Dorsolateral prefrontal cortex (tissue), 120 donors: ENCODE measurements at regions of chr13 and their contacts with region 1.

Region 1: DNA sequence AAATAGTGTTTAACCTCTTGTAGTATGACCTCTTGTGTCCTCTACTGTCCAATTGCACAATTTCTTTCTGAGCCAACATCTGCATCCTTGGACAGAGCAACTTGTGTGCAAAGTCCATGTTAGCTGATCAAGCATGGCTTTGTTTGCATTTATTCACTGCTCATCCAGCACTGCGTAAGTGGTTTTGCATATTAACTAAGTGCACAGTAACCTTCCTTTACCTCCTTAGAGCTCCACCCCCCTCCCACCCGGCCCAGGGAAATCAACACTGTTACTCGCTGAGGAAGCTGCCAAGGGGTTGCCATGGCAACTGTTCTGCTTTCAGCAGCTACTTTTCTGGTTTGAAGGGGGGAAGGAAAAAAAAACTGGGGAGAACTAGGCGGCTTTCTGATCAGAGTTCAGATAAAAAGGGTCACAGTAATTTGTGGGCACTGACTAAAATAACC is 153.5 kb upstream of the KLF12 start:
- DNase-seq: peak; percentile 45 to 90 (median 80)
- H3K4me3 ChIP-seq: peak overlapping the region; percentile 23 to 67 (median 50)
- H3K27ac ChIP-seq: peak overlapping the region in 50 of 59 donors; percentile 8 to 89 (median 72)
- H3K27me3 ChIP-seq: no peaks in the 10 kb centered on the region
- CTCF ChIP-seq: no peak

Region 2: GRCh38 chr13:73754727-73755292 is 532.9 kb before region 1 on chr13:
- intact Hi-C with region 1: loop called in 1 of 2 experiments (anchors 10 kb)
- DNase-seq: peak in 1 of 10 donors; percentile 9
- H3K4me3 ChIP-seq: no peak overlapping the region
- H3K27ac ChIP-seq: no peak overlapping the region
- H3K27me3 ChIP-seq: no peaks in the 10 kb centered on the region
- CTCF ChIP-seq: peak; percentile 66 to 90 (median 79)

Region 3: GRCh38 chr13:73835138-73835721 is 452.5 kb before region 1 on chr13:
- intact Hi-C with region 1: loop called (anchors 5 to 10 kb)
- DNase-seq: no peak
- H3K4me3 ChIP-seq: no peak overlapping the region
- H3K27ac ChIP-seq: no peak overlapping the region
- H3K27me3 ChIP-seq: no peaks in the 10 kb centered on the region
- CTCF ChIP-seq: peak; percentile 32 to 82 (median 72)

Region 4: DNA sequence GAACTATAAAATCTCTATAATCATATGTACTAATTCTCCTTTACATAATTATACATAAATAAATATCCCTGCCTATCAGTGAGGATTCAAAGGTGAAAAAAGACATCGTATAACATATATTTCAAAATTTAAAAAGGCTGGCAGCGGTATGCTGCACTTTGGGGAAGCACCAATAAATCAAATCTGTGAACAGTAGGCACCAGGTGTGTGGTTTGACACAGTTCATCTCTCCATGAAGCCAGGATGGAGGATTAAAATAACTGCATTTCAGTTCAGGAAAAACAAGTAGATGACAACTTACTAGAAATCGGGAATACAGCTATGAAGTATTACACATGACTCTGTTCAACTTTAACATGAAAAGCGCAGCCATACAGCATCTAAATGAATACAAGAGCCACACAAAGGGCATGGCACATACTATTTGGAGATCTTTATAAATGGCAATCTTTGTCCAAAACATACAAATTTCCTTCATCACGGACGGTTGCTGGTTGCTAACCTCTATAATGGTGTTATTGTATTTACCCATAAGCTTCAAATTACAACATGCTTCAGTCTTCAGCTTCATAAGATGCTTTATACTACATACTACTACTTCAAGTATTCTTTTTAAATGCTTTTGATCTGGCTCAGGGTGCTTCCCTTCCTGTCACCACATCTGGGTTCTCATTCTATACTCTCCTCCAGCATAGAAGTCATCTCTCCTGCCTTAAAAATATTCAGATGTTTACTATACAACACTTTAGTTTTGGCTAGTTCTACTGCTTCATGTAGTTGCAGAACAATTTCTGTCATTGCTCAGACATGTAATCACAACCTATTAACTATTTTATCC is 282.2 kb before region 1 on chr13:
- intact Hi-C with region 1: no loop called
- DNase-seq: no peak
- H3K4me3 ChIP-seq: no peak overlapping the region
- H3K27ac ChIP-seq: no peak overlapping the region
- H3K27me3 ChIP-seq: no peaks in the 10 kb centered on the region
- CTCF ChIP-seq: no peak

Region 5: DNA sequence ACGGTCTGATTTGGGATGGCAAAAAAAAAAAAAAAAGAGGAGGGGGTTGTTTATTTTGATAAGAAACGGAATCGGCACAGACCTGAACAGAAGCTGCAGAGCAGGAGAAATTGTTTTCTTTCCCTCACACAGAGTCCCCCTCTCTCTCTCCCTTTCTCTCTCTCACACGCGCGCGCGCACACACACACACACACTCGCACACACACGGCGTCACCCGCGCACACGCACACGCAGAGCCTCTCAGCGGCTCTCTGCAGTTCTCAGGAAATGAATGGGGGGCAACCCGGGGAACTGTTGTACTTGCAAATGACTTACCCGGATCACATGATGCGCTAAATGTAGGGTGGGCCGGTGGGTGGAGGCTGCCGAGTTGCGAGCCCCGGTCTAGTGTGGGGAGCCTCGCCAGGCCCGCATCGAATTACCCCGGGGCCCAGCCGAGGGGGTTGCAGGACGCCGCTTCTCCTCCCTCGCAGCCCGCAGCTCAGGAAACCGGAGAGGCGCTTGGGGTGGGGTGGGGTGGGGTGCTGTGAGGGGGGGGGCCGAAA is 154.0 kb before region 1 on chr13:
- intact Hi-C with region 1: loop called (anchors 5 to 10 kb)
- DNase-seq: peak; percentile 34 to 82 (median 72)
- H3K4me3 ChIP-seq: peak overlapping the region; percentile 65 to 91 (median 80)
- H3K27ac ChIP-seq: peak overlapping the region in 56 of 59 donors; percentile 41 to 94 (median 86)
- H3K27me3 ChIP-seq: no peaks in the 10 kb centered on the region
- CTCF ChIP-seq: no peak

Region 6: DNA sequence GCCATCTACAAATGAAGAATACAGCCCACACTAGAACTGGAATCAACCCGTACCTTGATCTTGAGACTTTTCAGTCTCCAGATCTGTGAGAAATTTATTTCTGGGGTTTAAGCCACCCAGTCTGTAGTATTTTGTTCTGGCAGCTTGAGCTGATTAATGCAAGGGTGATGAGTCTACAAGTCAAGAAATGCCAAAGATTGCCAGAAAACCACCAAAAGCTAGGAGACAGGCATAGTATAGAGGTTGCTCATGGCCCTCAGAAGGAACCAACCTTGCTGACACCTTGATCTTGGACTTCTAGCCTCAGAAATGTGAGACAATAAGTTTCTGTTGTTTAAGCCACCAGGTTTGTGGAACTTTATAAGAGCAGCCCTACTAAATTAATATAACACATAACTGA is 274.6 kb after region 1 on chr13:
- intact Hi-C with region 1: no loop called
- DNase-seq: no peak
- H3K4me3 ChIP-seq: no peak overlapping the region
- H3K27ac ChIP-seq: no peak overlapping the region
- H3K27me3 ChIP-seq: no peaks in the 10 kb centered on the region
- CTCF ChIP-seq: no peak

Region 7: DNA sequence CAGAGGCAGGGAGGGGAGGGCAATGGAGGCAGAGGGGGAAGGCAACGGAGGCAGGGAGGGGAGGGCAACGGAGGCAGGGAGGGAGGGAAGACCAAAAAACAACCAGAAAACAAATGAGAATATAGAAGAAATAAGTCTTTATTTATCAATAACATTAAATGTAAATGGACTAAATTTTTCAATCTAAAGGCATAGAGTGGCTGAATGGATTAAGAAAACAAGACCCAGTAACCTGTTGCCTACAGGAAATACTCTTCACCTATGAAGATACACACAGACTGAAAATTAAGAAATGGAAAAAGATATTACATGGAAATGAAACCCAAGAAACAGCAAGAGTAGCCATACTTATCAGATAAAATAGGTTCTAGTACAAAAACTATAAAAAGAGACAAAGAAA is 657.9 kb after region 1 on chr13:
- intact Hi-C with region 1: no loop called
- DNase-seq: no peak
- H3K4me3 ChIP-seq: no peak overlapping the region
- H3K27ac ChIP-seq: no peak overlapping the region
- H3K27me3 ChIP-seq: no peaks in the 10 kb centered on the region
- CTCF ChIP-seq: no peak